GM18951 (cell line): ENCODE measurements at regions of chr12 and their contacts with region 1.

Region 1: GRCh38 chr12:48750769-48751735 is 34.5 kb upstream of the CCNT1 start:
- POLR2A ChIP-seq: no peak

Region 2: DNA sequence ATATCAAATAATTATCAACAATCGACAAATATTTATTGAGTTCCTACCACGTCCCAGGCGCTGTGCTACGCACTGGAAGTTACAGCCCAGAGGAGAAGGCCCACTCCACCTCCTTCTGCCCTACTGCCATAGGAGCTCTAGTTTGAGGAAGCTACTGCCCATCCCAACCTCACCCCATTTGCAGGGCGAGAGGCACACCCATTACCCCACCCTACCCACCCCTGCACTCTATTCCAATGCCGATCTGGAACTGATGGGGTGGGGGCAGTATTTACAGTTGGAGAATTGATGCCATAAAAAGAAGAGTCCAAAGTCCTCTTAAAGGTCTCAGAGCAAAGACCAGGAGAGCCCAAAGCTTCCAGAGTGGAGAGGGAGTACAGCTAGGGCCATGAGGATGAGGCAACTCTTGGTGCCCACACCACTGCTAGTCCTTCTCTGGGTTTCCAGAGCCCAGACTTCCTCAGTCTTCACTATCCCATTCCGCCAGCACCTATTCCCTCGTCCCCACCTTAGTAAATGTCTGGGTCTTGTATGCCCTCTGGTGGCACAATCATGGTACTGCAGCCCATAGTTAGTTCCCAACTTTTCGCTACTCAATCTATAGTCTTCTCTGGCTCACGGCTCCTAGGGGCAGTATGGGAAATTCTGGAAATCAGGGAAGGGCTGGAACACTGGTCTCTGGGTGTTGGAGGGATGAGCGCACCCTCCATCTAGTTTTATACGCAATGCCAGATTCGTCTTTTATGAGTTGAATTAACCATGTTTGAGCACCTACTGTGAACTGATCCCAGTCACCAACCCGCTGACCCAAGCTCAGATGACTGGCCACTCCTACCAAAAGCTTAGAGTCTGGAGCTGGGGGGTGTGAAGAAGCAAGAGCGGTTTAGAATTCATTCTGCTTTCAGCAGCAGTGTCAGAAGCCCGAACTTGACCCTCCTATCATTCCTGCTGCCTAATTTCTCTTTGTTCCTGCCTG is 44.7 kb after region 1 on chr12:
- in situ Hi-C with region 1: loop called (anchors 5 kb)
- POLR2A ChIP-seq: no peak

Region 3: DNA sequence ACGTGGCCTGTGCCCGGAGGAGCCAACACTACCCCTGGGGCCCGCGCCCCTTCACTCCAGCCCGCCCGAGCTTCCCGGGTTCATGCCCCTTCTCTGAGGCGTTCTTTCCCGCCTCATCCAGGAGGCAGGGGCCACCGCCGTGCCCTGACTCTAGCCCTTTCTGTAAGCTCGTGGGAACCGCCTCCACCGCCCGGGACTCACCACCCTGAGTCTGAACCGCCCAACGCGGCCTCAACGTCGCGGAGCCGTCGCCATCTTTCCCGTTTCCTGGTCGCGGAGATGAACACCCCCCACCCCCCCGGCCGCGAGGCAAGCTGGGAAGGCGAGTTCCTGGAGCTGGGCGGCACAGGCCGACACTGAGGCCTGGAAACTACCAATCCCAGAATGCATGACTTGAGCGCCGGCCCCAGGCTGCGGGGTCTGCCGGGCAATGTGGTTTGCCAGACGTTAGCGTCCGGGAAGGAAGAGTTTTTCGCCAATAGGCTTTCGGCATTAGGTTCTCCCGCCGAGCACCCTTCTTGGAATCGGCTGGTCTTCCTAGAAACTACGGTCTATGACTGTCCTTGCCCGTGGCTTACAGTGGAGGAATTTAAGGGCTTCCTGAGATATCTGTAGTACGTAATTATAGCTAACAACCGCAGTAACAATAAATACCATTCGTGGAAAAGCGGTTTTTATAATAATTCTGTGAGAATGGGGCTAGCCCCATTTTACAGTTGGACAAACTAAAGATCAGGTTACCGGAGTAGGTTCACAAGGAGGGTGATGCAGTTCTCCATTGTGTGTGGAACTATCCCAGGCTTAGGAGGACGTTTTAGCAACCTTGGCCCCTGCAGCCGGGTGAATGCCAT is 101.1 kb after region 1 on chr12 and contains the start of gene DDX23:
- in situ Hi-C with region 1: no loop called
- POLR2A ChIP-seq: peak; percentile 86